ENCODE measurements at regions of chr6 and their contacts with region 1.

Region 1: DNA sequence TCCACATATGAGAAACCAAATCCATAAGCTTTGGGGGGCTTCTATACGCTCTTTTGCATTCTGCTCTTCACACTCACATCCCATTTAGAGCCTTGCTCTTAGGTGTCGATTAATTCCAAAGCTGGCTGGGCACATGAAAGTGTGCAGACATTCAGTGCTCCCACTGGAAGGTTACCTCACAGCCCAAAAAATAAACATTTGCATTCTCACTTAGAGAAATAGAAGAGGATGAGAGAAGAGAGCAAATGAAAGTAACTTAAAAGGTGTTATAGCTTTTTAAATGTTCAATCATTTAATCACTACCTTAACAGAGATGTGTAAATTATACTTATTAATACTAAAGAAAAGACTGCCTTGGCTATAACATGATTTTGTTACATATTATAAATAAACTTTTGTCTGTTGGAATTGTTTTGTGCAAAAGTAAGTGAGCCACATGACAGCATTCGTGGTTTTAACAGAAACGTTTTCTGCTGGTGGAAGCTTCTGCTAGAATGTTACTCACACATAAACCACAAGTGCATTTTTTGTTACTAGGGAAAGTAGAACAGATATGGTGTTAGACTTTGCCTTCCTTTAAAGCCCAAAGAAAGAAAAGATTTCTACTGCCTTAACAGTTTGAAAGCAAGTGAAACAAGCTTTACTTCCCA is 116.7 kb downstream of the SIM1 start:
- DNase-seq: no peak
- H3K4me3 ChIP-seq: no peak overlapping the region
- H3K27ac ChIP-seq: no peak overlapping the region
- H3K4me1 ChIP-seq: peaks cover 48% of the 10 kb centered on the region
- H3K27me3 ChIP-seq: no peaks in the 10 kb centered on the region
- CTCF ChIP-seq: no peak
- POLR2A ChIP-seq: no peak

Region 2: DNA sequence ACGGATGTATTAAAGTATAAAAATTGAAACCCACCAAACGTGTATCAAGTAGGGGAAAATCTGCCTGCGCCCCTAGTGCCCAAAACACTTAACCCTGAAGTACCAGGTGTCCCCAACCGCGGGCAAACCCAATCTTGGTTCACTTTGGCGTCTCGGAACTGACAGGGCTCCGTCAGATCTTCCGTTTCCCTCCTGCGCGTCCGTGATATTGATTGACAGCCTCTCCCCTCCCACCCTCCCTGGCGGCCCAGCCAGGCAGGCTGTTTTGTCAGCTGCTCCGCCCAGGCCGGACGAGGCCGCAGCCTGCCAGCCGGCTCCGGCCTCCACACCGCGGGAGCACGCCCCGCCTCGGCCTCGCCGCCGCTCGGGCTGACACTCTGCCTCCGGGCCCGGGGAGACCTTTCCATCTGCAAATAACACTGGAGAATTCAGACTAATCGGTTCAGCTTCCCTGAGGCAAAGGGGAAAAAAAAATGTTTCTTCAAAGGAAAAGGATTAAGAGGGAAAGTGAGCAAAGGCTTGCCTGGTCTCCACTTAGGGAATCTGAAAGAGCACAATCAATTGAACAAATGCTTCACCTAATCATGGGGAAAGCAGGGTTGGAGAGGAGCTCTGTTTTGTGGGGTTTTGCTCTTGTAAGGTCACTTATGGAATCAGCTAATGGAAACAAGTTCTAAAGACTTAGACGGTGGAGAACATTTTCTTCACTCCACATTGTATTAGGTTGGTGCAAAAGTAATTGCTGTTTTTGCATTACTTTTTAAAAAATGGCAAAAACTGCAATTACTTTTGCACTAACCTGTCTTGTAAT is 119.0 kb before region 1 on chr6:
- CTCF ChIA-PET with region 1: interaction called, 4 read pairs
- POLR2A ChIA-PET with region 1: no interaction called
- dilution Hi-C with region 1: no loop called
- intact Hi-C with region 1: loop called (anchors 5 kb)
- DNase-seq: peak; percentile 86
- H3K4me3 ChIP-seq: peak overlapping the region; percentile 10 to 65 (median 28)
- H3K27ac ChIP-seq: peak overlapping the region; percentile 81
- H3K4me1 ChIP-seq: peaks cover 35% of the 10 kb centered on the region
- H3K27me3 ChIP-seq: no peaks in the 10 kb centered on the region
- CTCF ChIP-seq: no peak
- POLR2A ChIP-seq: peak; percentile 70

Region 3: DNA sequence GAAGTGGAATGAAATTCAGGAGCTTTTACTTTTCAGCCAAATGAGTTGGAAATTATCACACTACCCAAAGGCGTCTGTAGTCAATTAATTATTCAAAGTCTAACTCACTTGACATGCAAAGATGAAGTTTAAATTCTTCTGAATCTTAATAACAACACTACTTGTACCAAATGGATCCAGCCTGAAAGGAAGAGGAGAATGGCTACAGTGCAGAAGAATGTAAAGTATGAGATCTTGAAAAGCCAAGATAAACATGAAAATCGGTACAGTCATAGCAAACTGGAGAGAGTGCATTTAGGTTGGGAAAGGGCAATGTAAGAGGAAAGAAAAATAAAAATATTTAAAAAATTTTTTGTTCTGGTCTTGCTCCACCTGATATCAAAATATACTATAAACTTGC is 78.8 kb before region 1 on chr6:
- CTCF ChIA-PET with region 1: no interaction called
- POLR2A ChIA-PET with region 1: no interaction called
- dilution Hi-C with region 1: no loop called
- intact Hi-C with region 1: loop called (anchors 2 kb)
- DNase-seq: peak; percentile 81
- H3K4me3 ChIP-seq: no peak overlapping the region
- H3K27ac ChIP-seq: peak overlapping the region; percentile 64
- H3K4me1 ChIP-seq: peaks cover 31% of the 10 kb centered on the region
- H3K27me3 ChIP-seq: no peaks in the 10 kb centered on the region
- CTCF ChIP-seq: no peak
- POLR2A ChIP-seq: peak; percentile 17

Region 4: GRCh38 chr6:100276311-100277057 is 71.5 kb before region 1 on chr6:
- CTCF ChIA-PET with region 1: no interaction called
- POLR2A ChIA-PET with region 1: no interaction called
- dilution Hi-C with region 1: no loop called
- intact Hi-C with region 1: loop called (anchors 1 kb)
- DNase-seq: peak; percentile 34
- H3K4me3 ChIP-seq: no peak overlapping the region
- H3K27ac ChIP-seq: peak overlapping the region; percentile 50
- H3K4me1 ChIP-seq: peaks cover 20% of the 10 kb centered on the region
- H3K27me3 ChIP-seq: no peaks in the 10 kb centered on the region
- CTCF ChIP-seq: no peak
- POLR2A ChIP-seq: no peak

Region 5: DNA sequence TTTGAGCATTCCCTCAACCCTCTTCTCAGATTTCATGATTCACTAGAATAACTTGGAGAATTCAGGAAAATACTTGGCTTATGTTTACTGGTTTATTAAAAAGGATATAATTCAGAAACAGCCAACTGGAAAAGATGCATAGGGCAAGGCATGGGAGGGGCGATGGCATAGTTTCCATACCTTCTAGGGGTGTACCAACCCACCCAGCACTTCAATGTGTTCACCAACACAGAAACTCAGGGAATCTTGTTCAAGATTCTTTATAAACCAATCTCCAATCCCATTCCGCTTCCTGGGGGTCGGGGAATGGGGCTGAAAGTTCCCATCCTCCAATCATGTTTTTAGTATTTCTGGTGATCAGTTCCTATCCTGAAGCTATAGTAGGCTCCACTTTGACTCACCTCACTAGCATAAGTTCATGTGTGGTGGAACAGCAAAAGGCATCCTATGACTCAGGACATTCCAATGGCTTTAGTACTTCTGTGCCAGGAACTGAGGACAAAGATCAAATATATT is 47.7 kb before region 1 on chr6:
- CTCF ChIA-PET with region 1: interaction called, 5 read pairs
- POLR2A ChIA-PET with region 1: interaction called, 3 read pairs
- dilution Hi-C with region 1: no loop called
- intact Hi-C with region 1: loop called (anchors 1 kb)
- DNase-seq: peak; percentile 85
- H3K4me3 ChIP-seq: no peak overlapping the region
- H3K27ac ChIP-seq: peak overlapping the region; percentile 100
- H3K4me1 ChIP-seq: peaks cover 74% of the 10 kb centered on the region
- H3K27me3 ChIP-seq: no peaks in the 10 kb centered on the region
- CTCF ChIP-seq: no peak
- POLR2A ChIP-seq: peak; percentile 29

Region 6: DNA sequence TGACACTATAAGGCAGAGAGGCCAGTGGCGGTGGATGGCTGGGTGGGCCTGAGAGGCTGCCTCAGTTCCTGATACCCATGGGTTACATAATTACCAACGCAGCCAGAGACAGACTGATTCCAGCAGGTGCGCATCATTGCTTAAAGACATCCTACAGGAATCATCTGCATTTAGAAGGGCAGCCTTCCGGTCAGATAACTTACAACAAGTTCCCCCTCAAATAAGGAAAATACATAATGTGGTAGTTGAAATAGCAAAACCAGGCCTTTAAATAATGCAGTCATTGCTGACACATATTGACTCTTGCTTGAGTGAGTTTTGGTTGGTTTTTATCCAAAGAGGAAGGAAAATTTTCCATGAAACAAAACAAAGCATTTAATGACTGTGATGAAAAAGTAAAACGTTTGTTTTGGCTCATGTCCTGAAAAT is 34.8 kb after region 1 on chr6:
- CTCF ChIA-PET with region 1: no interaction called
- POLR2A ChIA-PET with region 1: no interaction called
- dilution Hi-C with region 1: no loop called
- intact Hi-C with region 1: loop called (anchors 2 kb)
- DNase-seq: peak; percentile 88
- H3K4me3 ChIP-seq: no peak overlapping the region
- H3K27ac ChIP-seq: peak overlapping the region; percentile 8
- H3K4me1 ChIP-seq: peaks cover 12% of the 10 kb centered on the region
- H3K27me3 ChIP-seq: no peaks in the 10 kb centered on the region
- CTCF ChIP-seq: no peak
- POLR2A ChIP-seq: no peak

Measured in endothelial cell of umbilical vein (primary cell).